Left cardiac atrium (tissue), 4 donors: ENCODE measurements at regions of chr4 and their contacts with region 1.

Region 1: GRCh38 chr4:6673660-6674499 is 19.8 kb upstream of the S100P start:
- DNase-seq: peak; percentile 94
- ATAC-seq: peak; percentile 93 to 95

Region 2: GRCh38 chr4:6640292-6641163 is 33.4 kb before region 1 on chr4 and contains the start of gene MRFAP1:
- intact Hi-C with region 1: loop called in 1 of 2 experiments (anchors 2 kb)
- DNase-seq: peak; percentile 96
- ATAC-seq: peak; percentile 93 to 95
- total RNA-seq, gene MRFAP1: 234 to 277 TPM

Region 3: DNA sequence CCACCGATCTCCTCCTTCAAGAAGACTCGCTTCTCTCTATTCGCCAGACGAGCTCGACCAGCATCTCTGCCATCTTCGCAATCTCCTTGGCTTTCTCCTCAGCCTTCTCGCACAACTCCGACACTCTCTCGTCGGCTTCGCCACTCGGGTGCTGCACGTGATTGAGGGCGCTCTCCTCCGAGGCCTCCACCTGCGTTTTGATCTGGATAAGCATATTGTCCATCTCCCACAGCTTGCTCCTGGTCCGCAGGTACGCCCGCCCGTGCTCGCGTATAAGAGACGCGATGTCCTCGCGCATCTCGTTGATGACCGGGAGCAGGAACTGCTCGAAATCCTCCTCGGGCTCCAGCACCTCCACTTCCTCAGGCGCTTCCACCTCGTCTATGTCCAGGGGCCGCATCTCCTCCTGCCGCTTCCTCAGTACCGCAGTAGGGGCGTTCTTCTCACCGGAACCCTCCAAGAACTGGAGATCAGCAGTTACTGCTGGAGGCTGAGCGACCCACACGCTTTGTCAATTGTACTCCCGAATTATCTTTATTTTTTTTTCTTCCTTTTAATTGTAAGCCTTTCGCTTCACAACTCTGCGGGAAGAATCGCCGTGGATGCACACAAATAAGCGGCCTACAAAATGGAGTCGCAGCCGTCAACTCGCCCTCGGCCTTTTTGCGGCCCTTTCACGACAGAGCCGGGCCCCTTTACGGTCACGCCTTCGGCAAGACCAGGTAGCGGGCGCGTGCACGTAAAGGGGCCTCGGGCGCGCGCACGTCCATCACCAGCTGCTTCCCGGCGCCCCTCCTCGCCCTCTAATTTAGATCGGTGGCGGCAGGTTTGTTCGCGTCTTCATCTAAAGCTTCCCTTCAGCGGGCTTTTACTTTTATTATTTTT is 35.6 kb after region 1 on chr4 and contains the start of gene MRFAP1L1:
- intact Hi-C with region 1: loop called in 1 of 2 experiments (anchors 5 kb)
- DNase-seq: peak; percentile 97
- ATAC-seq: peak; percentile 90 to 91
- total RNA-seq, gene MRFAP1L1: 45.9 to 52.9 TPM